Naive thymus-derived CD4-positive, alpha-beta T cell (primary cell): ENCODE measurements at regions of chr1 and their contacts with region 1.

Region 1: DNA sequence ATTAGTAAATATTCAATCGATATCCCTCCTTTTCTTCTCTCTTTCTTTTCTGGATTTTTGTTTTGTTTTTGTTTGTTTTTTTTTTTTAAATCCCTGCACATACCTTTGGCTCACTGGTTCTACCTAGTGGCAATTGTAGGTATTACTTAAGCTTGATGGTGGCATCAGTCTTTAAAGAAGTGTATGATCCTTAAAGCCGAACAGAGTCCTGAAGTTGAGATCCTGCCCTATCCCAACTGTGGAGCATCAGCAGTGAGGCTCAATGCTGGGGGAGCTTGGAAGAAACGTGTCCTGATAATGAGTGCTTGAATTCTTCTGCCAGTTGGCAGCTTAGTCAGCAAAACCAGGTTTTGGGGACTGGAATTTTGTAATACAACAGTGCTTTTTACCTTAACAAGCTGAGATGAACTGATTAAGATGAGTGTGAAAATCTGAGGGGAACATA is 60.8 kb downstream of the FASLG start:
- DNase-seq: peak in 7 of 9 donors; percentile 29 to 61 (median 48)
- ATAC-seq: peak; percentile 87
- H3K4me3 ChIP-seq: no peak overlapping the region
- H3K4me3 Mint-ChIP-seq: no peak overlapping the region
- H3K27ac ChIP-seq: no peak overlapping the region
- H3K27ac Mint-ChIP-seq: peak overlapping the region in 4 of 9 donors; percentile 0 to 22 (median 9)
- H3K4me1 ChIP-seq: peaks cover 0 to 13% of the 10 kb centered on the region in 2 donors
- H3K4me1 Mint-ChIP-seq: peaks cover 21 to 50% (median 32%) of the 10 kb centered on the region in 7 donors
- H3K27me3 ChIP-seq: no peaks in the 10 kb centered on the region
- H3K27me3 Mint-ChIP-seq: peaks cover 0 to 8% (median 0%) of the 10 kb centered on the region in 5 donors

Region 2: DNA sequence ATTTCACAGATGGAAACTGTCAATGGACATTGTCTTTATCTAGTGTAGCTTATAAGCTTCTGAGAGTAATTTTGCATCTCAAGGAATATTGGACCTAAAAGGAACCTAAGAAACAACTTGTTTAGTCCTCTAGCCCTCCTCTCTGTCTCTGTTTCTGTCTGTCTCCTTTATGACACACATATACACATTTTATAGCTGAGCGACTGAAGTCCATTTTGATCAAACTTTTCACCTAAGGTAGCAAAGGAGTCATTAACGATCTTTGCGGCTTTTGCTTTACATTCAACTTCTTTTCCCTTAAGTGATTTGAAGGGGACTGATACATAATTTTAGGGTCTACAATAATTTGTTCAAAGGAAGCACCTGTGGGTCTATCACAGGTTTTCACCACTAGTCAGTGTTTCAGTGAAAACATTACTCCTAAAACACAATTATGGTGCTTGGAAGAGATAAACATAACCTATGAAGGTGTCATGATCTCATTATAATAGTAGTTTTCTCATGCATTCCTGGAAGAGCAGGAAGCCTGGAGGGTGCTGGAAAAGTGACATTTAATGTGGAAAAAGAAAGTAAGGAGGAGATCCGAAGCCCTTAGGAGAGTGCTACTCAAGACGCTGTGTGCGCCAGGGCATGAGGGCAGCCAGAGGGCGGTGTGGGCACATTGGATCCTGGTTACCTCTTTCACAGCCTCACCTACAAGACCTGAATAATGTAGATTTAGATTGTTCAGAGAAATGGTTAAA is 629.8 kb before region 1 on chr1:
- CTCF ChIA-PET with region 1: no interaction called
- POLR2A ChIA-PET with region 1: no interaction called
- intact Hi-C with region 1: loop called in 1 of 2 experiments (anchors 2 kb)
- DNase-seq: peak; percentile 25 to 61 (median 46)
- ATAC-seq: peak; percentile 86
- H3K4me3 ChIP-seq: no peak overlapping the region
- H3K4me3 Mint-ChIP-seq: peak overlapping the region in 3 of 10 donors; percentile 9 to 35 (median 24)
- H3K27ac ChIP-seq: no peak overlapping the region
- H3K27ac Mint-ChIP-seq: peak overlapping the region in 4 of 9 donors; percentile 1 to 72 (median 50)
- H3K4me1 ChIP-seq: no peaks in the 10 kb centered on the region
- H3K4me1 Mint-ChIP-seq: peaks cover 0 to 7% (median 6%) of the 10 kb centered on the region in 7 donors
- H3K27me3 ChIP-seq: no peaks in the 10 kb centered on the region
- H3K27me3 Mint-ChIP-seq: peaks cover 0 to 7% (median 0%) of the 10 kb centered on the region in 5 donors

Region 3: DNA sequence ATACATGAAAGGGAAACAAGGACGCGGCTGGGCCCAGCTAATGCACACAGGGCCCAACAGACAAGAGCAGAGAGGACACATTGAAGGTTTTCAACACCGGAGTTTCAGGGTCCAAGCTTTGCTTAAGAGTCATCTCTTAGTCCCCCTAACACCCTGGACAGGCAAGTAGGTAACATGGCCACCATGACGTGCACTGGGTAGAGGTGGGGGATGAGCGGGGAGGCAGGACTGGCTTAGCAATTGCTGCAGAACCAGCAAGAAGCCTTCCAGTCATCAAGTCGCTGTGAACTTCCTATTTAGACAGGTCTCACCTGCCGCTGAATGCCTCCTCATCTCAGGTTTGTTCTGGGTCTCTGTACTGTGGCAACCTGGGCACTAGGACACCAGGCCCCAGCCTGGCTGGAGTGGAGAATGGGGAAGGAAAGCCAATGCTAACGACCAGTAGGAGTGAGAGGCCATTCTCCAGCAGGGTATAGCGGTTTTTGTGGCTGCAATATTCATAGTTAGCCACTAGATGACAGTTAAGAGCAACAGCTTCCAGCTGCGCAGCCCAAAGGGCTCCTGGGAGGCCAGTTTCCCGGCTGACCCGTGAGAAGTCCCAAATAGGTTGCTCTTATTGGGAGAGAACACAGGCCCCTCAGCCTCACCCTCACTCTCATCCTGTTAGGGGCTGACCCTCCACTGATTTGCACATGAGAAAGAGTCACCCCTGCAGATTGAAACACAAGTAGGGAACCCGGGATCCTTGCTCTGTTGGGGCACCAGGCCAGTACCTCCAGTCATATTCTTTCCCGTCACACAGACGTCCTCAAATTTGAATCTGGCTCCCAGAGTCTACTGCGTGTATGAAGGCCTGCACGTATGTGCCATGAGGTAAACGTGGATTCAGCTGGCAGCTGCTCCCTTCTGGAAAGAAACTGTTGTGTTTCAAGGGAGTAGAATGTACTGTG is 269.9 kb before region 1 on chr1:
- CTCF ChIA-PET with region 1: interaction called, 10 read pairs
- POLR2A ChIA-PET with region 1: no interaction called
- intact Hi-C with region 1: loop called (anchors 1 kb)
- DNase-seq: peak in 7 of 9 donors; percentile 22 to 42 (median 32)
- ATAC-seq: peak; percentile 90
- H3K4me3 ChIP-seq: no peak overlapping the region
- H3K4me3 Mint-ChIP-seq: peak overlapping the region in 4 of 10 donors; percentile 35 to 67 (median 56)
- H3K27ac ChIP-seq: no peak overlapping the region
- H3K27ac Mint-ChIP-seq: peak overlapping the region in 4 of 9 donors; percentile 45 to 90 (median 87)
- H3K4me1 ChIP-seq: no peaks in the 10 kb centered on the region
- H3K4me1 Mint-ChIP-seq: peaks cover 0 to 23% (median 18%) of the 10 kb centered on the region in 7 donors
- H3K27me3 ChIP-seq: no peaks in the 10 kb centered on the region
- H3K27me3 Mint-ChIP-seq: peaks cover 0 to 3% (median 0%) of the 10 kb centered on the region in 5 donors

Region 4: GRCh38 chr1:172609528-172609927 is 110.2 kb before region 1 on chr1:
- CTCF ChIA-PET with region 1: interaction called, 95 read pairs
- POLR2A ChIA-PET with region 1: interaction called, 5 read pairs
- intact Hi-C with region 1: loop called (anchors 1 kb)
- DNase-seq: peak in 6 of 9 donors; percentile 21 to 53 (median 38)
- ATAC-seq: peak; percentile 75
- H3K4me3 ChIP-seq: no peak overlapping the region
- H3K4me3 Mint-ChIP-seq: no peak overlapping the region
- H3K27ac ChIP-seq: no peak overlapping the region
- H3K27ac Mint-ChIP-seq: peak overlapping the region in 3 of 9 donors; percentile 1 to 25 (median 7)
- H3K4me1 ChIP-seq: no peaks in the 10 kb centered on the region
- H3K4me1 Mint-ChIP-seq: peaks cover 0 to 15% (median 6%) of the 10 kb centered on the region in 7 donors
- H3K27me3 ChIP-seq: no peaks in the 10 kb centered on the region
- H3K27me3 Mint-ChIP-seq: no peaks in the 10 kb centered on the region

Region 5: GRCh38 chr1:172662464-172663109 is 57.1 kb before region 1 on chr1:
- CTCF ChIA-PET with region 1: interaction called, 6 read pairs
- POLR2A ChIA-PET with region 1: interaction called, 3 read pairs
- intact Hi-C with region 1: loop called in 1 of 2 experiments (anchors 1 kb)
- DNase-seq: peak; percentile 50 to 86 (median 82)
- ATAC-seq: peak; percentile 87
- H3K4me3 ChIP-seq: peak overlapping the region; percentile 22
- H3K4me3 Mint-ChIP-seq: peak overlapping the region; percentile 44 to 75 (median 66)
- H3K27ac ChIP-seq: no peak overlapping the region
- H3K27ac Mint-ChIP-seq: peak overlapping the region in 8 of 9 donors; percentile 3 to 74 (median 51)
- H3K4me1 ChIP-seq: peaks cover 42 to 49% of the 10 kb centered on the region in 2 donors
- H3K4me1 Mint-ChIP-seq: peaks cover 41 to 78% (median 57%) of the 10 kb centered on the region in 7 donors
- H3K27me3 ChIP-seq: no peaks in the 10 kb centered on the region
- H3K27me3 Mint-ChIP-seq: peaks cover 0 to 8% (median 0%) of the 10 kb centered on the region in 5 donors

Region 6: GRCh38 chr1:172699111-172699510 is 20.6 kb before region 1 on chr1:
- CTCF ChIA-PET with region 1: interaction called, 6 read pairs
- POLR2A ChIA-PET with region 1: interaction called, 3 read pairs
- intact Hi-C with region 1: loop called (anchors 1 kb)
- DNase-seq: peak; percentile 13 to 76 (median 65)
- ATAC-seq: peak; percentile 92
- H3K4me3 ChIP-seq: peak overlapping the region; percentile 37
- H3K4me3 Mint-ChIP-seq: peak overlapping the region; percentile 61 to 81 (median 76)
- H3K27ac ChIP-seq: peak overlapping the region; percentile 44
- H3K27ac Mint-ChIP-seq: peak overlapping the region in 7 of 9 donors; percentile 87 to 98 (median 92)
- H3K4me1 ChIP-seq: peaks cover 77 to 80% of the 10 kb centered on the region in 2 donors
- H3K4me1 Mint-ChIP-seq: peaks cover 0 to 53% (median 0%) of the 10 kb centered on the region in 7 donors
- H3K27me3 ChIP-seq: no peaks in the 10 kb centered on the region
- H3K27me3 Mint-ChIP-seq: no peaks in the 10 kb centered on the region